ENCODE measurements at regions of chr4 and their contacts with region 1.

Region 1: DNA sequence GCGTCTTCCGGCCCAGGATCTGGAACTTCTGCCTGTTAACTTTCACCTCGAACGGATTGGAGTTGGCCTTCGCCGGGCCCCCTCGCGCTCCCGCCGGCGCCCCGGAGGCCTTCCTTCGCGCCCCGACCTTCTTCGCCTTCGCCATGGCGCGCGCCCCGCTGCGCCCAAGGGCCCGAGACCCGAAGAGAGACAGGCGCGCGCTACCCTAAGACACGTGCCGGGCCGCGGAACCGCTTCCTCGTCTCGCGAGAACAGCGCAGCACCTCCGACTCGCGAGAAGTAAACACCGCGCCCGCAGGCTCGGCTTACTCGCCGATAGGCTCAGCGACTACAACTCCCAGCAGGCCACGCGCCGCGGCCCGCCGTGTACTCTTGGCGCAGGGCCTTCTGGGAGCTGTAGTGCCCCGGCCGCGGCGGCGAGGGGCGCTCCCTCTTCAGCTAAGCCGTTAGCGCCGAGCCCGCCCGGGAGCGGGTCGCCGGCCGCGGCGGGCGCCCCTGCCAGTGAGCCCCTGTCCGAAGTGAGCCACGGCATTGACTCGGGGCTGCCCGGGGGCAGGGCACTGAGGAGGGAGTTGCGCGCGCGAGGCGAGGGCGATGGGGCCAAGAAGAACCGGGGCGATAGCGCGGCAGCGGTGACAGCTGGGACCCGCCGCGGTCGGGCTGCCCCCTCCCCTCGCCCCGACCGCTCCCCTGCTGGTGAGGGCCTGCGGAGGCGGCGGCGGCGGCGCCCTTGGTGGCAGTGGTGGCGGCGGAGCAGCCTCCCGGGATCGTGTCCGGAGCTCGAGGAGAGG is at the starts of genes GRK4 and NOP14:
- DNase-seq: peak; percentile 98
- ATAC-seq: peak; percentile 91
- H3K4me3 Mint-ChIP-seq: peak within 1 kb of the TSS; percentile 82
- H3K27ac Mint-ChIP-seq: peak within 1 kb of the TSS; percentile 60
- H3K4me1 Mint-ChIP-seq: peaks cover 22% of the 10 kb centered on the region
- H3K27me3 Mint-ChIP-seq: peaks cover 17% of the 10 kb centered on the region
- CTCF ChIP-seq: no peak
- total RNA-seq, gene GRK4: 1.4 to 3.5 TPM (median 1.6 TPM) in 3 replicates
- total RNA-seq, gene NOP14: 33.9 to 39.1 TPM (median 35.7 TPM) in 3 replicates

Region 2: GRCh38 chr4:2800691-2801596 is 162.4 kb before region 1 on chr4:
- CTCF ChIA-PET with region 1: no interaction called
- POLR2A ChIA-PET with region 1: no interaction called
- DNase-seq: peak; percentile 79
- ATAC-seq: peak; percentile 92
- H3K4me3 Mint-ChIP-seq: no peak overlapping the region
- H3K27ac Mint-ChIP-seq: peak overlapping the region; percentile 76
- H3K4me1 Mint-ChIP-seq: peaks cover 18% of the 10 kb centered on the region
- H3K27me3 Mint-ChIP-seq: no peaks in the 10 kb centered on the region; the same call in 1 of the 2 replicates
- CTCF ChIP-seq: no peak

Region 3: GRCh38 chr4:2948895-2949765 is 14.2 kb before region 1 on chr4:
- CTCF ChIA-PET with region 1: interaction called, 11 read pairs
- POLR2A ChIA-PET with region 1: interaction called, 10 read pairs
- DNase-seq: no peak
- ATAC-seq: peak; percentile 75
- H3K4me3 Mint-ChIP-seq: no peak overlapping the region
- H3K27ac Mint-ChIP-seq: no peak overlapping the region
- H3K4me1 Mint-ChIP-seq: no peaks in the 10 kb centered on the region
- H3K27me3 Mint-ChIP-seq: no peaks in the 10 kb centered on the region
- CTCF ChIP-seq: no peak

Measured in WTC11 (cell line).